HepG2 (cell line): ENCODE measurements at regions of chr18 and their contacts with region 1.

Region 1: GRCh38 chr18:39635966-39636365 is 2070.4 kb upstream of the CELF4 start:
- DNase-seq: no peak
- ATAC-seq: no peak
- H3K4me3 ChIP-seq: no peak overlapping the region
- H3K27ac ChIP-seq: no peak overlapping the region
- H3K4me1 ChIP-seq: peaks cover 39% of the 10 kb centered on the region
- H3K27me3 ChIP-seq: no peaks in the 10 kb centered on the region
- CTCF ChIP-seq: no peak
- EP300 ChIP-seq: no peak
- POLR2A ChIP-seq: no peak
- RAD21 ChIP-seq: no peak

Region 2: GRCh38 chr18:39604836-39605235 is 31.1 kb before region 1 on chr18:
- CTCF ChIA-PET with region 1: no interaction called
- POLR2A ChIA-PET with region 1: no interaction called
- in situ Hi-C with region 1: no loop called
- intact Hi-C with region 1: no loop called
- DNase-seq: no peak
- ATAC-seq: no peak
- H3K4me3 ChIP-seq: no peak overlapping the region
- H3K27ac ChIP-seq: no peak overlapping the region
- H3K4me1 ChIP-seq: peaks cover 6% of the 10 kb centered on the region; the same call in 1 of the 2 replicates
- H3K27me3 ChIP-seq: no peaks in the 10 kb centered on the region
- CTCF ChIP-seq: no peak
- EP300 ChIP-seq: no peak
- POLR2A ChIP-seq: no peak
- RAD21 ChIP-seq: no peak

Region 3: DNA sequence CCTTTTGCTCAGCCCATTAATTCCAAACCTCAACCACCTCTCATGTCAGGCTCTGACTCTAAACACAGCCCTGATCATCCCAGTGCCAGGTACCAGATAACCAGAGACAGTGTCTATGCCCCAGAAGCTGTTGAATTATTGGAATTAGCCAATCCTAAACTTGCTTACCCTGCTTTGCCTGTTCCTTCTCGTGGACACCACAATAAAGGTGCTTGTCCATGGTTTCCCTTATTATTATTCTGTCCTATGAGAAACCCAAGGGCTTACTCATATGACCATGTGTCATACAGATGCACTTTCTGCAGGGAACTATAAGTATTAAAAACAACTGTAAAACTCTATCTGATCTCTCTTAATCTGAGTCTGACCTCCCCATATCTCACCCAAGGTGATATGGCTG is 125.3 kb after region 1 on chr18:
- CTCF ChIA-PET with region 1: no interaction called
- POLR2A ChIA-PET with region 1: no interaction called
- in situ Hi-C with region 1: no loop called
- intact Hi-C with region 1: loop called (anchors 5 kb)
- DNase-seq: no peak
- ATAC-seq: no peak
- H3K4me3 ChIP-seq: no peak overlapping the region
- H3K27ac ChIP-seq: no peak overlapping the region
- H3K4me1 ChIP-seq: no peaks in the 10 kb centered on the region
- H3K27me3 ChIP-seq: no peaks in the 10 kb centered on the region
- CTCF ChIP-seq: no peak
- EP300 ChIP-seq: no peak
- POLR2A ChIP-seq: no peak
- RAD21 ChIP-seq: no peak

Region 4: GRCh38 chr18:39799006-39799405 is 163.0 kb after region 1 on chr18:
- CTCF ChIA-PET with region 1: no interaction called
- POLR2A ChIA-PET with region 1: no interaction called
- in situ Hi-C with region 1: no loop called
- intact Hi-C with region 1: loop called (anchors 10 kb)
- DNase-seq: no peak
- ATAC-seq: peak; percentile 58
- H3K4me3 ChIP-seq: peak overlapping the region; percentile 78 to 95 (median 86)
- H3K27ac ChIP-seq: no peak overlapping the region
- H3K4me1 ChIP-seq: peaks cover 38% of the 10 kb centered on the region
- H3K27me3 ChIP-seq: no peaks in the 10 kb centered on the region; a peak in 1 of 5 replicates
- CTCF ChIP-seq: no peak
- EP300 ChIP-seq: no peak
- POLR2A ChIP-seq: no peak
- RAD21 ChIP-seq: no peak